PC-3 (cell line): ENCODE measurements at regions of chr9 and their contacts with region 1.

Region 1: DNA sequence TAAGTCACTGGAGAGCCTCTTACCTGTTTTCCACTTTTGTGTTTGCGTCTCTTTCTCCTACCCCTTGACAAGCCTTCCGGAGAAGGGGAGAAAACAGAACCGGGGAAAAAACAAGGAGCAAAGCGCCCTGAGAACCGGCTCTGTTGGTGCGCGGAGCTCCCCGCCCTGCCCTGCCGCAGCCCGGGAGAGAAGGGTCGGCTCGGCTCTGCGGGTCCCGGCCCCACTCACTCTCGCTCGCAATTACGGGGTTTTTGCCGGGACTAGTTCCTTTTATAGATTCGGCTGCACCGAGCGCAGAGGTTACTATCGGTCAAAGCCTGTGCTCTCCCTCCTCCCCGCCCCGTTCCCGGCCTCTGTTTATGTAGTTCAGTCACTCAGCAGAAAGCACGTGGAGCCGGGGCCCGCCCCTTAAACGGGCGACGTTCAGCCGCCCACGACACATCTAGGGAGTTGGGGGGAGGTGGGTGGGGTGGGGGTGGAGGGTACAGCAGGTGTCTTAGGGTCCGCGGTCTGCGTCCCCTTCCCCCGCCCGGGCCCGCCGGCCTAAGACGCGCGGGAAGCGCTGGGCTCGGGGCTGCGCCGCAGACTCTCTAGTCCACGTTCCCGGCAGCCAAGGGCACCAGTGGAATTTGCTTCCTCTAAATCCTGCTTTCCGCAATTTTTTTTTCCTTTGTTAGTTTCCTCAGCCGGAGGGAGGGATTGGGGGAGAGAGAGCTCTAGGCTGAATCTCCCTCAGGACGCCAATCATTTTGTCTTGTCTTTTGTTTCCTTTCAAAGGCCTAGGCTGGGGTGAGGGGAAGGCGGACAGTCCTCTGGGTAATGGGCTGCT is at the start of gene ABCA1:
- DNase-seq: peak; percentile 58
- ATAC-seq: peak; percentile 55
- H3K4me3 ChIP-seq: peak within 1 kb of the TSS; percentile 88
- H3K27ac ChIP-seq: peak within 1 kb of the TSS; percentile 43
- H3K4me1 ChIP-seq: no peaks in the 10 kb centered on the region
- H3K27me3 ChIP-seq: no peaks in the 10 kb centered on the region
- CTCF ChIP-seq: no peak
- total RNA-seq, gene ABCA1: 2.3 and 2.5 TPM in 2 replicates

Region 2: DNA sequence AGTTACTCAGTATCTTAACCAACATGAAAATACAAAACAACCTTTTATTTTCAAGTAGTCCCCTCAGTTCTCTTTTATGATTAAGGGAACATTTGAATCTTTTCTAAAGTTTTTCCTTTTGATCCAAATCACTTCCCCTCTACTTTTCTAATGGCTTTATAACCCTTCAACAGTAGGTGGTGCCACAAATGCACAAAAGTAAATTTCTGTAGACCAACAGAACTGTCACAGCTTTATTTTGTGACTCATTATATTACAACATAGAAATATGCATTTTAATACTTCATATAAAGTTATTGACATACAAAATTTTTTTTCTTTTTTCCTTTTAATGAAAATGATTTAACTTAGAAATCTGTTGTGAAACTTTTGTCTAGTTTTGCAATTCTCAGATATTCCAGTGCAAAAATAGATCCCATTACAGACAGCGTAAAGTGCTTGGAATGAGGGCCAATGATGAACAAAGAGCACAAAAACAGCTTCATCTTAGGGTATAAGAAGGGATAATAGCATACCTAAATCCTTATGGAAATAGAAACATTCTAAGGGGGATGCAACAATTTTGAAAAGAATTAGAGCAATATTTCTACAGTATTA is 147.2 kb before region 1 on chr9:
- CTCF ChIA-PET with region 1: no interaction called
- POLR2A ChIA-PET with region 1: no interaction called
- intact Hi-C with region 1: loop called (anchors 1 kb)
- DNase-seq: peak; percentile 75
- ATAC-seq: peak; percentile 72
- H3K4me3 ChIP-seq: no peak overlapping the region
- H3K27ac ChIP-seq: peak overlapping the region; percentile 37; the same call in 1 of the 2 replicates
- H3K4me1 ChIP-seq: peaks cover 13% of the 10 kb centered on the region; the same call in 1 of the 2 replicates
- H3K27me3 ChIP-seq: no peaks in the 10 kb centered on the region
- CTCF ChIP-seq: peak; percentile 79

Region 3: GRCh38 chr9:104968025-104968982 is 40.2 kb after region 1 on chr9:
- CTCF ChIA-PET with region 1: no interaction called
- POLR2A ChIA-PET with region 1: no interaction called
- intact Hi-C with region 1: loop called (anchors 1 kb)
- DNase-seq: peak; percentile 76
- ATAC-seq: peak; percentile 96
- H3K4me3 ChIP-seq: peak overlapping the region; percentile 91
- H3K27ac ChIP-seq: no peak overlapping the region
- H3K4me1 ChIP-seq: peaks cover 5% of the 10 kb centered on the region
- H3K27me3 ChIP-seq: no peaks in the 10 kb centered on the region
- CTCF ChIP-seq: no peak

Region 4: DNA sequence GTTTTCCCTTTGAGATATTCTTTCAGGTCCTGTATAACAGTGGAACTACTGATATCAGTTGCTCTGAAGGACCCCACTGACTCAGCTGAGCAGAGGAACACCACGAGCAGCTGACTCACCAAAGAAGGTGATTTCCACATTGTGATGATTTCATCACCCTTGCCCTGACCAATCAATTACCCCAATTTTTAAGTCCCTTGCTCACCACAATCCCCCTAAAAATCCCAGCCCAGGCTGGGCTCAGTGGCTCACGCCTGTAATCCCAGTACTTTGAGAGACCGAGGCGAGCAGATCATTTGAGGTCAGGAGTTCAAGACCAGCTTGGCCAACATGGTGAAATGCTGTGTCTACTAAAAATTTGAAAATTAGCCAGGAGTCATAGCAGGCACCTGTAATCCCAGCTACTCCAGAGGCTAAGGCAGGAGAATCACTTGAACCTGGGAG is 125.1 kb after region 1 on chr9:
- CTCF ChIA-PET with region 1: no interaction called
- POLR2A ChIA-PET with region 1: no interaction called
- intact Hi-C with region 1: loop called (anchors 10 kb)
- DNase-seq: peak; percentile 37
- ATAC-seq: no peak
- H3K4me3 ChIP-seq: no peak overlapping the region
- H3K27ac ChIP-seq: no peak overlapping the region
- H3K4me1 ChIP-seq: peaks cover 21% of the 10 kb centered on the region
- H3K27me3 ChIP-seq: no peaks in the 10 kb centered on the region
- CTCF ChIP-seq: no peak

Region 5: DNA sequence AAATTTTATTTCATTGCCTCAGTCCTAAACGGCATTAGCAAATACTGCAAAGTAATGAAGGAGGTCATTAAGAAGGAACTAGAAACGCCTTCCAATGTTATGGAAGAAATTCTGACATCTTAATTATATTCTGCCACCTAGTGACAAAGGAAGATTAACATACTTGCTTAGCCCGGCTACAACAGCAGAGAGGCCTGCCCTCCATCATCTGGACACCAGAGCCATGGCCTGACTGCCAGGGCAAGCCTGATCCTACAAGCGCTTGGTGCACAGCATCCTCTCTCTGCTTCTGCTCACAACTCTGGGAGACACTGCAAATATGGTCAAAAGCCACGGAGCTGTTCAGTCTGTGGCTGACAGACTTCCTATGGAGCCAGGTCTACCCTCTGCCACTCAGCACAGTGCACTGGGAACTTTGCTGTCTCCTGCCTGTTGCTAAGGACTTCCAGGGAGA is 229.0 kb after region 1 on chr9:
- CTCF ChIA-PET with region 1: no interaction called
- POLR2A ChIA-PET with region 1: no interaction called
- intact Hi-C with region 1: loop called (anchors 1 kb)
- DNase-seq: peak; percentile 67
- ATAC-seq: peak; percentile 79
- H3K4me3 ChIP-seq: no peak overlapping the region
- H3K27ac ChIP-seq: no peak overlapping the region
- H3K4me1 ChIP-seq: peaks cover 7% of the 10 kb centered on the region
- H3K27me3 ChIP-seq: no peaks in the 10 kb centered on the region
- CTCF ChIP-seq: peak; percentile 64

Region 6: GRCh38 chr9:105414947-105415661 is 487.0 kb after region 1 on chr9:
- CTCF ChIA-PET with region 1: no interaction called
- POLR2A ChIA-PET with region 1: no interaction called
- intact Hi-C with region 1: loop called (anchors 5 kb)
- DNase-seq: peak; percentile 56
- ATAC-seq: peak; percentile 78
- H3K4me3 ChIP-seq: no peak overlapping the region
- H3K27ac ChIP-seq: no peak overlapping the region
- H3K4me1 ChIP-seq: peaks cover 8% of the 10 kb centered on the region; the same call in 1 of the 2 replicates
- H3K27me3 ChIP-seq: no peaks in the 10 kb centered on the region
- CTCF ChIP-seq: peak; percentile 94